A673 (cell line): ENCODE measurements at regions of chr10 and their contacts with region 1.

Region 1: DNA sequence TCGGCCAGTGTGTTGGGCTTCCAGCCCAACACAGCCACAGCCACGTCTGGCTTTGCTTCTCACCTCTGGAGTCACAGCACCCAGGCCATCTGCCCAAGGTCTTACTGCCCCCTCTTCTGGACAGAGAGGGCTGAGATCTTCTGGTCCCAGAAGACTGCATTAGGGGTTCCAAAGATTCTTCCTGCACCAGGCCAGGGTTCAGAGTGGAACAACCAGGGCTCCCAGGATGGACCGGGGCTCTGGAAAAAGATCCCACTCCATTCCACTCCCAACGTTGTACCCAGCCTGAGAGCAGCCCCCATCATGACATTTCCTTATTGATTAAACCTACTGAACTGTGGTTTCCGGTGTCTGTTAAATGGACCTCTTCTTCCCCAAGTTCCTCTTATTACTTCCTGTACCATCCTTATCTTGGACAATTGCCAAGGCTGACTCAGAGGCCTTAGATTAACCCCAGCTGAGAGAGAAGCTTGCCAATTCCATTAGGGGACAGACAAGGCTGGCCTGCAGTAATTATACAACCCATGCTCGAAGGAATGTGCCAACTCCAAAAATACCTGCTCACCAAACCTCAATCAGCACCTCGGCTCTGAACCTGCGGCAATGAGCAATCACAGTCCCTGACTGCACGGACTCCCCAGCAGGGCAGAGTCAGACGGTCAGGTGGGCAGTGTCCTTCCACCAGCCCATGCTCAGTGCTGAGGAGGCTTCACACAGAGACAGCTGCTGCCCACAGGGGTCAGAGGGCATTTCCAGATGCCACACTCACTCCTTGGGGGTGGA is 47.9 kb upstream of the NPFFR1 start:
- DNase-seq: peak; percentile 99
- H3K4me3 ChIP-seq: no peak overlapping the region
- H3K27ac ChIP-seq: peak overlapping the region; percentile 78
- H3K4me1 ChIP-seq: peaks cover 52% of the 10 kb centered on the region
- H3K27me3 ChIP-seq: no peaks in the 10 kb centered on the region
- CTCF ChIP-seq: no peak; the same call in 1 of the 2 replicates

Region 2: GRCh38 chr10:70374775-70375614 is 43.3 kb after region 1 on chr10:
- CTCF ChIA-PET with region 1: no interaction called
- POLR2A ChIA-PET with region 1: interaction called, 12 read pairs
- intact Hi-C with region 1: no loop called
- DNase-seq: no peak
- H3K4me3 ChIP-seq: no peak overlapping the region
- H3K27ac ChIP-seq: no peak overlapping the region
- H3K4me1 ChIP-seq: peaks cover 13% of the 10 kb centered on the region
- H3K27me3 ChIP-seq: no peaks in the 10 kb centered on the region
- CTCF ChIP-seq: no peak

Region 3: GRCh38 chr10:70417568-70417967 is 85.9 kb after region 1 on chr10:
- CTCF ChIA-PET with region 1: no interaction called
- POLR2A ChIA-PET with region 1: interaction called, 11 read pairs
- intact Hi-C with region 1: no loop called
- DNase-seq: no peak
- H3K4me3 ChIP-seq: no peak overlapping the region
- H3K27ac ChIP-seq: no peak overlapping the region
- H3K4me1 ChIP-seq: no peaks in the 10 kb centered on the region
- H3K27me3 ChIP-seq: no peaks in the 10 kb centered on the region
- CTCF ChIP-seq: no peak